GM12878 (cell line): ENCODE measurements at regions of chr3 and their contacts with region 1.

Region 1: DNA sequence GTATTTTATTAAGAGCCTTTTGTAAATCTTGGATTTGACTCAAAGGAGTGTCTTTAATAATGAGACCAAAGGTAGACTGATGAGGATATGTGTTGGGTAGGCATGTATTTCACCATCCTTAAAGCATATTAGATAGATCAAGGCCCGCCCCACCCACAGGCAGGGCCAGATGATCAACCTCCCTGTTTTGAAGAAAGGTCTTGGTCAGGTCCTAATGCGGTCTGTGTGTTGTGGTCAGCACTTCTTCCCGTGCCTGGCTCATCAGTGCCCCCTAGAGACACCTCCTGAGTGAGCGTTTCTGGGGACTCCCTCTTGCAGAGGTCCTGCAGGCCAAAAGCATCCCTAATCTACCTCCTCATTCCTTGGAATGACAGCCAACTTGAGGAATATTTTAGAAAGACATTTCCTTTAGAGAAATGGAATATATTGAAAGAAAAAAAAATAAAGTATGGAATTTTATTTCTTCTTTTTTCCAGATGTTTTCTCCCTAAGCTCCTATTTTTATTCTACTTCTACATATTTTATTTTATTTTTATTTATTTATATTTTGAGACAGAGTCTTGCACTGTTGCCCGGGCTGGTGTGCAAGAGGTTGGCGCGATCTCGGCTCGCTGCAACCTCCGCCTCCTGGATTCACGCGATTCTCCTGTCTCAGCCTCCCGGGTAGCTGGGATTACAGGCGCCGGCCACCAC is 6.0 kb downstream of the TM4SF4 start:
- DNase-seq: peak; percentile 52
- ATAC-seq: peak; percentile 99
- H3K4me3 ChIP-seq: no peak overlapping the region
- H3K27ac ChIP-seq: no peak overlapping the region
- H3K4me1 ChIP-seq: no peaks in the 10 kb centered on the region
- H3K27me3 ChIP-seq: no peaks in the 10 kb centered on the region
- CTCF ChIP-seq: peak; percentile 86 to 95 (median 93)
- EP300 ChIP-seq: no peak
- POLR2A ChIP-seq: no peak
- RAD21 ChIP-seq: peak; percentile 97

Region 2: DNA sequence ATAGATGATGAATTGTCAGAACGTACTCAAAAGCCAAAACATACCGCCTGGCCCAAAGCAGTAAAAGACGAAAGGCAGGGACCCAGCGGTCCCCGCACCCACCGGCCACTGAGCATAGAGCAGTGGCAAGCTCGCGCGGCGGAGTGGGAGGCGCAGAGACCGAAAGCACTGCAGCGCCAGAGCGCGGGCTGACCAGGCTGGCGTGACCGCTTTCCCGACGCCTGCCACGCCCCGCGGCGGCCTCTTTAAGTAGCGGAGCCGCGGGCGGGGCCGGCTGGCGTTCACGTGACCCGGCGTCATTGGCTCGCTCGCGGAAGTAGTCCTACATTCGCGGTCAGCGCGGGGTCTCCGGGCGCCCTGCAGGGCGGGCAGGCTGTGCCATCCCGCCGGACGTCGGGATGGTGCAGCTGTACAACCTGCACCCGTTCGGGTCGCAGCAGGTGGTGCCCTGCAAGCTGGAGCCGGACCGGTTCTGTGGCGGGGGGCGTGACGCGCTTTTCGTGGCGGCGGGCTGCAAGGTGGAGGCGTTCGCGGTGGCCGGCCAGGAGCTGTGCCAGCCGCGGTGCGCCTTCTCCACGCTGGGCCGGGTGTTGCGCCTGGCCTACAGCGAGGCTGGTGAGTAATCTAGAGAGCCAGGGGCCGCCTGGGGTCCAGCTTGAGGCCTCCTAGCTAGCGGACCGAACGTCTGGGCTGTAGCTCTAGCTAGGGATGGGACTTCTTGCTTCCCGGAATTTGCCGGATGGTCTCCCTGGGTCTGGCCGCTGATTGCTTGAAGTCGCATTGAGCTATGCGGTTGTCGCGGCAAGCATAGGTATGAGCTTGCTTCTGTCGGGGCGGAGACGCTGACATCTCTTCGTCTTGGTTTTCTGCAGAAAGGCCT is 350.9 kb before region 1 on chr3 and contains the start of gene HPS3:
- CTCF ChIA-PET with region 1: no interaction called
- POLR2A ChIA-PET with region 1: no interaction called
- RAD21 ChIA-PET with region 1: no interaction called
- SMC1A ChIA-PET with region 1: no interaction called
- in situ Hi-C with region 1: loop called (anchors 10 kb)
- intact Hi-C with region 1: loop called (anchors 5 kb)
- DNase-seq: peak; percentile 46
- ATAC-seq: peak; percentile 96
- H3K4me3 ChIP-seq: peak within 1 kb of the TSS; percentile 89
- H3K27ac ChIP-seq: peak within 1 kb of the TSS; percentile 68
- H3K4me1 ChIP-seq: peaks cover 8% of the 10 kb centered on the region; the same call in 1 of the 2 replicates
- H3K27me3 ChIP-seq: no peaks in the 10 kb centered on the region
- CTCF ChIP-seq: no peak
- EP300 ChIP-seq: peak in 1 of 2 experiments; percentile 60; a peak in 1 of 4 replicates
- POLR2A ChIP-seq: peak; percentile 97
- RAD21 ChIP-seq: no peak
- polyA plus RNA-seq, gene HPS3: 2.7 to 4.5 TPM

Region 3: DNA sequence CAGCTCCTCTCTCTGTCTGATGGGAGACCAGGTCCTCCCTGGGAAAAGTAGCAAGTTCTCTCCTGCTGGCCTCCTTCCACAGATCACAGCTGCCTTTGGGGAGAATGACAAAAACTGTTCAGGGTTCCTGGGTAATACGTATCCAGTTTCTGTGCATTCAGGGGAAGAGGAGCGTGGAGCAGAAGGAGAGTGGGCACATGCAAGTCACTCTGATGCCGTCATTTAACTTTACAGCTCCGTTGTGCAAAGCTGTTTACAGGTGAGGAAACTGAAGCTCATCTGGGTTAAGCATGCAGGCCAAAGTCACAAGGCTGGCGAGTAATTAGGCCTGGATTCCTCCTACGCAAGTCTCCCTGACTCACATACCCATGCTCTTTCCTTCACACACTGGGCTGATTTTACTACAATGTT is 95.6 kb before region 1 on chr3:
- CTCF ChIA-PET with region 1: interaction called, 25 read pairs
- POLR2A ChIA-PET with region 1: no interaction called
- RAD21 ChIA-PET with region 1: interaction called, 3 read pairs
- SMC1A ChIA-PET with region 1: interaction called, 24 read pairs
- in situ Hi-C with region 1: loop called (anchors 5 kb)
- intact Hi-C with region 1: no loop called
- DNase-seq: no peak
- ATAC-seq: no peak
- H3K4me3 ChIP-seq: no peak overlapping the region
- H3K27ac ChIP-seq: no peak overlapping the region
- H3K4me1 ChIP-seq: no peaks in the 10 kb centered on the region
- H3K27me3 ChIP-seq: no peaks in the 10 kb centered on the region
- CTCF ChIP-seq: no peak
- EP300 ChIP-seq: no peak
- POLR2A ChIP-seq: no peak
- RAD21 ChIP-seq: no peak

Region 4: GRCh38 chr3:149393345-149394160 is 86.9 kb before region 1 on chr3:
- CTCF ChIA-PET with region 1: interaction called, 25 read pairs
- POLR2A ChIA-PET with region 1: no interaction called
- RAD21 ChIA-PET with region 1: interaction called, 5 read pairs
- SMC1A ChIA-PET with region 1: interaction called, 24 read pairs
- in situ Hi-C with region 1: loop called (anchors 5 kb)
- intact Hi-C with region 1: loop called (anchors 1 kb)
- DNase-seq: peak; percentile 15
- ATAC-seq: peak; percentile 99
- H3K4me3 ChIP-seq: no peak overlapping the region
- H3K27ac ChIP-seq: no peak overlapping the region
- H3K4me1 ChIP-seq: no peaks in the 10 kb centered on the region
- H3K27me3 ChIP-seq: no peaks in the 10 kb centered on the region
- CTCF ChIP-seq: peak; percentile 82 to 94 (median 86)
- EP300 ChIP-seq: no peak
- POLR2A ChIP-seq: no peak
- RAD21 ChIP-seq: peak; percentile 80

Region 5: GRCh38 chr3:149401215-149401925 is 79.1 kb before region 1 on chr3:
- CTCF ChIA-PET with region 1: interaction called, 11 read pairs
- POLR2A ChIA-PET with region 1: no interaction called
- RAD21 ChIA-PET with region 1: interaction called, 5 read pairs
- SMC1A ChIA-PET with region 1: interaction called, 6 read pairs
- in situ Hi-C with region 1: no loop called
- intact Hi-C with region 1: no loop called
- DNase-seq: no peak
- ATAC-seq: no peak
- H3K4me3 ChIP-seq: no peak overlapping the region
- H3K27ac ChIP-seq: no peak overlapping the region
- H3K4me1 ChIP-seq: no peaks in the 10 kb centered on the region
- H3K27me3 ChIP-seq: no peaks in the 10 kb centered on the region
- CTCF ChIP-seq: no peak
- EP300 ChIP-seq: no peak
- POLR2A ChIP-seq: no peak
- RAD21 ChIP-seq: no peak

Region 6: DNA sequence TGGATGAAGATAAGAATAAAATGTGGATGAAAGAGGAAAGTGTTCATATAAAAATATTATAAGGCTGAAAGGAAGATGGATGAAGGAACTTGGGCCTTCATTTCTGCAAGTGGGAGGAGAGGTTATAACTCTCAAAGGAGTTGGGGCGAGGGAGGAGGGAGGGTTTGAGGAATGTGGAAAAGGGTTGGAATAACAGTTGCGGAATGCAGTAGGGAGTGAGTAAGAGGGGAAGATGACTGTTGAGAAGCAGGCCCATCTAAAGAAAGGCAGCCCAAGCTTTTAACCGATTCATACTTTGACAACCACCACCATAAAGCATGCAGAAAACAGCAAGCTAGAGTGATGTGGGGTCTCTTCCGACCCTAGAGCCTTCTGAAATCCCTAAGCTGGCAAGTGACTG is 14.3 kb before region 1 on chr3:
- CTCF ChIA-PET with region 1: interaction called, 31 read pairs
- POLR2A ChIA-PET with region 1: no interaction called
- RAD21 ChIA-PET with region 1: no interaction called
- SMC1A ChIA-PET with region 1: interaction called, 19 read pairs
- in situ Hi-C with region 1: no loop called
- intact Hi-C with region 1: no loop called
- DNase-seq: no peak
- ATAC-seq: no peak
- H3K4me3 ChIP-seq: no peak overlapping the region
- H3K27ac ChIP-seq: no peak overlapping the region
- H3K4me1 ChIP-seq: peaks cover 6% of the 10 kb centered on the region; the same call in 1 of the 2 replicates
- H3K27me3 ChIP-seq: no peaks in the 10 kb centered on the region
- CTCF ChIP-seq: no peak
- EP300 ChIP-seq: no peak
- POLR2A ChIP-seq: no peak
- RAD21 ChIP-seq: no peak